Natural killer cell (primary cell): ENCODE measurements at regions of chr7 and their contacts with region 1.

Region 1: DNA sequence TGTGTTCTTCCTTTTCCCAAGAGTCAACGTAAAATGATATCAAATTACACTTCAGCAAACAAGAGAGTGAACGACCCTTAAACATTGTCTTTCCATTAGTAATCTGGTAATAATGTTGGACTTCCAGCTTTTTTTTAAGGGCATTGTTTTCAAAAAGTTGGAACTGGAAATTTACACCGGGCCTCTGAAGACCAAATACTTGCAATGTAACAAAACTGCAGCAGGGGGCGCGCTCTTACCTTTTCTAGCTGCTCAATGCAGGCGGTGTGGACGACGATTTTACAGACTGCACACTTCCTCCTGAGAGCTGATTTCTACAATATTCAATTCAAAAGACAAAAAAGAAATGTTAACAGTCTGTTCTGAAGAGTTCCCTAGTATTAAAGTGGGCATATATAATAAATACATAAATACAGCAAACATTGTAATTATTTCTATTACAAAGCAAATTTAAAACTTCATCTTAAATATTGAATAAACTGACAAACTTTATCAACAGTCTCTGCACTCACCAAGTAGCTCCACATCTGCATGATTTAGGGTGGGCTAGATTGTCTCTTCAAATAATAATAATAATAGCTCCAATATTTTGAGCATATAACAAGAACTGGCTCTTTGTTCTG is 190.4 kb downstream of the DGKI start:
- DNase-seq: peak; percentile 29 to 61
- ATAC-seq: peak in 1 of 3 donors; percentile 38
- H3K4me3 ChIP-seq: no peak overlapping the region
- H3K4me3 Mint-ChIP-seq: no peak overlapping the region
- H3K27ac ChIP-seq: no peak overlapping the region
- H3K27ac Mint-ChIP-seq: no peak overlapping the region
- H3K4me1 ChIP-seq: no peaks in the 10 kb centered on the region
- H3K4me1 Mint-ChIP-seq: no peaks in the 10 kb centered on the region
- H3K27me3 ChIP-seq: no peaks in the 10 kb centered on the region
- H3K27me3 Mint-ChIP-seq: no peaks in the 10 kb centered on the region
- CTCF ChIP-seq: peak; percentile 65

Region 2: DNA sequence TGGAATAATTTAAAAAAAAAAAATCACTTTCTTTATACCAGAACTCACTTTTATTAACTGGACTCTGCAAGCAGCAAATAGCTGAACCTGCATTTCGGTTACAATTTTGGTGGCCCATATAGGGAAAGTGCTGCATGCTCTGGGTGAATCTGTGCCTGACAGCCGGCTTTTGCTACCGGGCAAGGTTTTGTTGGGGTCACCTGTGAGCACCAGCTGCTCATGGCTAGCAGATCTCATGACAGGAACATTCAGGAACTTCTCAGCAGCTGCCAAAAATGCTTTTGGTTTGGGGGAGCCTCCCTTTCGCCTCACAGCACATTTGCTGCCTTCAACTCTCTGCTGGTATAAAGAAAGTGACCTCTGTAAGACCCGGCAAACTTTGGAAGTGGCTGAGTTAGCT is 358.8 kb after region 1 on chr7:
- intact Hi-C with region 1: loop called (anchors 10 kb)
- DNase-seq: no peak
- ATAC-seq: no peak
- H3K4me3 ChIP-seq: no peak overlapping the region
- H3K4me3 Mint-ChIP-seq: no peak overlapping the region
- H3K27ac ChIP-seq: no peak overlapping the region
- H3K27ac Mint-ChIP-seq: no peak overlapping the region
- H3K4me1 ChIP-seq: no peaks in the 10 kb centered on the region
- H3K4me1 Mint-ChIP-seq: no peaks in the 10 kb centered on the region
- H3K27me3 ChIP-seq: no peaks in the 10 kb centered on the region
- H3K27me3 Mint-ChIP-seq: no peaks in the 10 kb centered on the region
- CTCF ChIP-seq: no peak